ENCODE measurements at regions of chr20 and their contacts with region 1.

Region 1: DNA sequence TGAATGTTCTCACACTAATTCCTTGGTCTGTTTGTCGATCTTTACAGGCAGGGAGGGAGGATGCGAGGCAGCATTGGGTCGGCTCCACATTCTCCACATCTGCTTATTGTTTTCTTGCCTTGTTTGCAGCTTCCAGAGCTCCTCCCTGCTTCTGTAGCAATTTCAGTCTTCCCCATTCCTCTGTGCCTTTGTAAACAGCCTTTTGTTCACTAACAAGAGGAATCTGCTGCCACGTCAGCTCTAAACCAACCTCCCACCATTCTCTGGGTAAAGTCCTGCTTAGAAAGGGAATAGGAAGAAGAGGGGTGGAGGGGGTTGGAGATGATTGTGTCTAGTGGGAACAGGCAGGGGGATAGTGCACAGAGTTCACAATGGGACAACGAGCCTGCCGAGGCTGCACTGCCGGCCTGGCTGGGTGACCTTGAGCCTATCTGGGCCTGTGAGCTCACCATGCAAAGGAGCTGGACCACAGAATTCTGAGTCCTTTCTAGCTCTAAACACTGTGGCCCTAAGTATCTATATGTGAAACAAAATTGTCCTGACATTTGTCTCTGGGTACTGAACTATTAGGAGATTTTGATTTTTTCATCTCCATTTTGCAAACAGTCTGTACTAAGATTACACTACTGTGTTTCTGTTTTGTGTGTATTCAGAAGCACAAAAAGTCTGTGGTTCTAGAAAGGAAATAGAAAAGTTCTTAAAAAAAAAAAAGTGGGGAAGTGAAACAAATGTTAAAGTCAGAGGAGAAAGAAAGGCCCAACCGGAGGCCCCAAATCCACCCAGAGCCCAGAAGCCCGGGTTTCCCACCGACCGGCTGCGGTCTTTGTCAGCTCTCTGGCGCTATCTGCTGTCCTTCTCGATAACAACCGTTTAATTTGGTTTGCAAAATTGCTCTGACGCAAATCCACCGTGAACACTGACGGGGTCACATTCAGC is 1.4 kb upstream of the PRND start:
- DNase-seq: peak; percentile 45 to 61
- ATAC-seq: peak; percentile 79 to 85
- H3K4me3 ChIP-seq: peak overlapping the region in 1 of 4 donors; percentile 3
- H3K27ac ChIP-seq: peak overlapping the region in 1 of 4 donors; percentile 6
- H3K4me1 ChIP-seq: peaks cover 0 to 7% of the 10 kb centered on the region in 2 donors
- H3K27me3 ChIP-seq: no peaks in the 10 kb centered on the region
- CTCF ChIP-seq: peak; percentile 68 to 77 (median 73)
- POLR2A ChIP-seq: peak in 1 of 2 donors; percentile 11

Region 2: DNA sequence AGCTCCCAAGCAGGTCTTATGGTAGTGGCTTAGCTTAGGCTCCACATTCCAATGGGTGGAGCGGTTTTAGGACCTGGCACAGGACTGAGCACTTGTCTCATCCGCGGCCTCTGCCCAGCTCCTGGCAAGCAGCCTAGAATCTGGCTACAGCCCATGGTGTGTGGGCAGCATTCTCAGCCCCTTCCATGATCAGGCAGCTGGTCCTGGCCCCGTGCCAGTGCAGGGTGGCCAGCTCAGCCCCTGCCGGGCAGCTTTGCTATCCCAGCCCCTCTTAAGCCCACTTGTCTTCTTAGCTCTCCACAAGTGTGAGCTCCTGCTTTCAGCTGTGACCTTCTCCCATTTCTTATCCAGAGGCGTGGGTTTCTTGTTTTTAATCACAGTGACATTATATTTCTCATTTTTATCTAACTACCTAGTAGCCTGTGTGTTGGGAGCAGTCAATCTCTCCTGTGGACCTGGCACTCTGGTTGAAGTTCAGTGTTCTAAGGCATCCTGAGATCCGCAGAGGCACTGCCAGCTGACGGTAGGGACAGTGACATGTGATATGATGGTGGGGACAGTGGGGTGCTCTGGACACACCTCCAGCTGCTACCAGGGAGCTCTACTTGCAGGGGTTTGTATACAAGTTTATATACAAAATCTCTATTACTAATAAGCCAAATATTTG is 118.5 kb before region 1 on chr20:
- in situ Hi-C with region 1: loop called in 3 of 4 experiments (anchors 5 kb)
- intact Hi-C with region 1: no loop called
- DNase-seq: no peak
- ATAC-seq: no peak
- H3K4me3 ChIP-seq: no peak overlapping the region
- H3K27ac ChIP-seq: no peak overlapping the region
- H3K4me1 ChIP-seq: peaks cover 0 to 6% of the 10 kb centered on the region in 2 donors
- H3K27me3 ChIP-seq: peaks cover 0 to 4% (median 4%) of the 10 kb centered on the region in 3 donors
- CTCF ChIP-seq: no peak
- POLR2A ChIP-seq: no peak

Region 3: DNA sequence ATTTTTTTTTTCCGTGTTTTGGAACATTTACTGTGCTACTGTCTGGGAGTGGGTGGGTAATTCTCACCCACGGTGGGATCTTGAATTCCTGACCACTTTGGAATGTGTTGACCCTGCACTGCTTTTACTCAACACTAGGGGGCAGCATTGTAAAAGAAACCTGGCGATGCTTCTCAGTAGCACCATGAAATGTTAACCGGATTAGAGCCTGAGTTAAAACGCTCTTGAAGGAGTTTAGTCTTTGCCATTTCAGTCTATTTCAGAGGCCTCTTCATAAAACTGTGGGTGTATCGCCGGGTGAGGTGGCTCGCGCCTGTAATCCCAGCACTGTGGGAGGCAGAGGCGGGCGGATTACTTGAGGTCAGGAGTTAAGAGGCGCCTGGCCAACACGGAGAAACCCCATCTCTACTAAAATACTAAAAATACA is 113.0 kb before region 1 on chr20:
- in situ Hi-C with region 1: loop called (anchors 5 kb)
- intact Hi-C with region 1: loop called (anchors 1 kb)
- DNase-seq: peak in 1 of 2 donors; percentile 30
- ATAC-seq: peak; percentile 84 to 91
- H3K4me3 ChIP-seq: no peak overlapping the region
- H3K27ac ChIP-seq: no peak overlapping the region
- H3K4me1 ChIP-seq: no peaks in the 10 kb centered on the region
- H3K27me3 ChIP-seq: peaks cover 0 to 4% (median 0%) of the 10 kb centered on the region in 3 donors
- CTCF ChIP-seq: peak; percentile 92 to 97 (median 95)
- POLR2A ChIP-seq: no peak

Region 4: DNA sequence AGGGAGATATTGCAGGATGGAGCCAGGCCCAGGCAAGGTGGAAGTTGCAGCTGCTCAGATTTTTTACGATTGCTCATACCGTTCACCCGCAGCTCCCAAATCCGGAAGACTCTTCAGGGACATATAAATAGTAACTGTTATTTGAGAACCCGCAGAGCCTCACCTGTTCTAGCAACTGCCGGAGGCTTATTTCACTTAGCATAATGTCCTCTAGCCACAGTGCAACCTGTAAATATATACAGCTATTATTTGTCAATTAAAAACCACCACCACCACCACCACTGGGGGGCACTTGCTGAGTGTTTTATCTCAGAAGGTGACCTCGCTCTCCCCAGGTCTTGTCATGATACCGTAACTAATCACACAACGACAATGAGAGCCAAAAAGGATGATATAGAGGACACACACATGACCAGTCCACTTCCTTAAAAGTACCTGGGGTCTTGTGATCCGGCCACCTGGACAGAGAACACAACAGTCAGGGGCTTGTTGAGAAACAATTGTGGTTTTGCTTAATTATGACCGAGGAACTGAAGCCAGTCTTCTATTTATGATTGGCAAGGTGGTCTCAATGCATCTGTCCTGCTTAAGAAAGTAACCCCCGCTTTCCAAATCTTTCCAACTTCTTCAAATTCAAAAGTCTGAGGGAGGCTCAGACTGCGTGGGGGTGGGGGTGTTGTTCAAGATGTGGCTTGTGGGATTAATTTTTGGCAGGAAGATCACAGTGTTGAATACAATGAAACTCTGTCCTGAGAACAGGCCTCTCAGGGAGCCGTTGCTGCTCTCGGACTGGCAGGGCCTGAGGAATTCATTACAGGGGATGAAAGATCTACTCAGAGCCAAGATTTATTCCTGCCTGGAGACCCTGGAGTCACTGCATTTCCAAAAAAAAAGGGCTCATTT is 106.3 kb before region 1 on chr20:
- in situ Hi-C with region 1: loop called in 2 of 4 experiments (anchors 5 kb)
- intact Hi-C with region 1: loop called (anchors 2 kb)
- DNase-seq: peak; percentile 24 to 60
- ATAC-seq: peak; percentile 93 to 97
- H3K4me3 ChIP-seq: no peak overlapping the region
- H3K27ac ChIP-seq: peak overlapping the region; percentile 32 to 72 (median 58)
- H3K4me1 ChIP-seq: peaks cover 6 to 10% of the 10 kb centered on the region in 2 donors
- H3K27me3 ChIP-seq: no peaks in the 10 kb centered on the region
- CTCF ChIP-seq: peak in 3 of 5 experiments; percentile 8 to 36 (median 26)
- POLR2A ChIP-seq: no peak

Region 5: DNA sequence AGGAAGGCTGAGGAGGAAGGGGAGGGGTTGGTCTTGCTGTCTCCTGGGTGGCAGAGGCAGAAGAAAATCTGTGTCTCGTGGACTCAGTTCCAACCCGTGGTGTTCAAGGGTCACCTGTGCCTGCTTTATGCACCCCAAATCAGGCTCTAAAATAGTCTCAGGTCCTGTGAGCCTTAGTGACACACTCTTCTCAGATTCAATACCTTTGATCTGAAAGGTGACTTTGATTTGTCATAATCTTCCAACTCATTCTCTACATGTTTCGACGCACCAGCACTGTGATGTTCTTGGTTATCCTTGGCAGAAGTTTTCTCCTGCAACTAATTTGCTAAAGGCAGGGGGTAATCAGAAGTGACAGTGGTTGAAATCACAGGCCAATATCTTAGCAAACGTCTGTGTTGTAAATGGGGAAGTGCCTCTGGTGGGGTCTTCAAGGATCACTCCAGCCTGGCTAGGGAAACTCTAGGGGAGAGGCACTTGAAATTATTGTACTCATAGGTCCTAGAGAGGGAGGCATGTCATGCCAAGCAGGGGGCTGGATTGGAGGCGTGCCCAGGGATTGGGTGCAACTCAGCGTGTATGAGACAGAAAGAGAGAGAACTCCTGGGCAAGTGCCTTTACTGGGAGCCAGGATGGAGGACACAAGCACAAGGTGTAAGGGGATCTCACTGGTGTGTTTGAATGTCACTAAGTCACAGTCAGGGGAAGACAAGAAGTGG is 17.6 kb before region 1 on chr20:
- in situ Hi-C with region 1: no loop called
- intact Hi-C with region 1: no loop called
- DNase-seq: no peak
- ATAC-seq: no peak
- H3K4me3 ChIP-seq: no peak overlapping the region
- H3K27ac ChIP-seq: no peak overlapping the region
- H3K4me1 ChIP-seq: peaks cover 0 to 6% of the 10 kb centered on the region in 2 donors
- H3K27me3 ChIP-seq: no peaks in the 10 kb centered on the region
- CTCF ChIP-seq: no peak
- POLR2A ChIP-seq: no peak

Measured in gastrocnemius medialis (tissue), 4 donors.